Ascending aorta (tissue), 2 donors: ENCODE measurements at regions of chr19 and their contacts with region 1.

Region 1: GRCh38 chr19:2610637-2611482 is 91.6 kb downstream of the GNG7 start:
- DNase-seq: peak; percentile 80 to 97
- H3K4me3 ChIP-seq: peak overlapping the region; percentile 51 to 61
- H3K27ac ChIP-seq: peak overlapping the region; percentile 92 to 94
- H3K4me1 ChIP-seq: peaks cover 0 to 9% of the 10 kb centered on the region in 2 donors
- H3K27me3 ChIP-seq: no peaks in the 10 kb centered on the region
- CTCF ChIP-seq: peak; percentile 93 to 99 (median 94)

Region 2: GRCh38 chr19:2427429-2428320 is 183.2 kb before region 1 on chr19 and contains the start of gene TIMM13:
- intact Hi-C with region 1: loop called (anchors 2 kb)
- DNase-seq: peak; percentile 88 to 98
- H3K4me3 ChIP-seq: peak within 1 kb of the TSS; percentile 69 to 77
- H3K27ac ChIP-seq: peak within 1 kb of the TSS; percentile 86 to 95
- H3K4me1 ChIP-seq: peaks cover 19 to 25% of the 10 kb centered on the region in 2 donors
- H3K27me3 ChIP-seq: no peaks in the 10 kb centered on the region
- CTCF ChIP-seq: no peak
- total RNA-seq, gene TIMM13: 55.0 TPM

Region 3: DNA sequence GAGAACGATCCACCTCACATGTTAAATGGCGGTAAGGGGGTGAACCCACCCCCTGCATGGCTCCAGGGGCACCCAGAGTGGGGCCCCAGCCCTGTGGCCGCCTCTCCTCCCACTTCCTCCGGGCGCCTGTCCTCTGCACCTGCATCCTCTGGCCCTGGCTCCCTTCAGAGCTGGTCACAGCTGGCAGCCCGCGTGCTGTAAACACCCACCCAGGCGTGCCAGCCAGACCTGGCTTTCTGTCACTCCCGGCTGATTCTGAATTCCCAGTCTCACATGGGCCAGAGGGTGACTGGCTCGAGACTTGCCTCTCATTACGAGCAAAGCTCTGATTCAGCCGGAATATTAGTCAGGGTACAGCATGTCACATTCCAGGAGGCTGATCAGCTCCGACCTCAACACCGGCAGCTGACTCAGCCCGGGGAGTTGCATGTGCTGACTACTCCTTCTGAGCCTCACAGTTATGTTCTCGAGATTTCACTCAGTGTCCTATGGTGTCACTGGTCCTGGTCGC is 16.5 kb after region 1 on chr19:
- intact Hi-C with region 1: loop called (anchors 1 kb)
- DNase-seq: peak; percentile 93 to 98
- H3K4me3 ChIP-seq: no peak overlapping the region
- H3K27ac ChIP-seq: peak overlapping the region; percentile 90 to 95
- H3K4me1 ChIP-seq: peaks cover 17 to 18% of the 10 kb centered on the region in 2 donors
- H3K27me3 ChIP-seq: no peaks in the 10 kb centered on the region
- CTCF ChIP-seq: no peak

Region 4: DNA sequence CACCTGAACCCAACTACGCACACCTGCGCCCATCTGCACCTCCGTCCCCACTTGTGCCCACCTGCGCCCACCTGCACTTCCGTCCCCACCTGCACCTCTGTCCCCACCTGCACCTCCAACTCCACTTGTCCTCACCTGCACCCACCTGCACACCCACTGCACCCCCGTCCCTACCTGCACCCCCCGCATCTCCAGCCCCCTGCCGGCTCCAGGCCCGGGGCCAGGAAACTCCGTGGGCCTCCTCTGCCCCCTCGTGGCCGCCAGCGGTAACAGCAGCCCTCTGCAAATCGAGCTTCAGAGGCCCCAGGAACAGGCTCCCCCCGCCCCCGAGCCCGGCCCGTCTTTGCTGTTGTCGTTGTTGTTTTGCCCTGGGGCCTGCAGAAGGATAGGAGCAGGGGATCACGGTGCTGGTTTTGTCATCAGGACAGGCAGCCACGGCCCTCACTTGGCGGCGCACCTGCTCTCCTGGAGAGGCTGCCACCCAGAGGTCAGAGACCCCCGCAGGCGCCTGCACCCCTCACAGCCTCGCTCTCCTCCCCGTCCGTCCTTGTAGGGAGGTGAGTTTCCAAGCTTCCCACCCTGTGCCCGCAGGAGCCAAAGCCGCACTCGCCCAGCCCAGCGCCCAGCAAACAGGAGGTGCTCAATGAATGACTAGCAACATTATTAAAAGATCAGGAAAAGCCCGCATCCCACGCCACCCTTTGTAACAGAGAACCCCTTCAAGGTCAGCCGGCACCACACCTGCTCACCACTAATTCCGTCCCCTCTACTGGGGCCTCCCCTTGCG is 26.2 kb after region 1 on chr19:
- intact Hi-C with region 1: loop called (anchors 2 kb)
- DNase-seq: no peak
- H3K4me3 ChIP-seq: peak overlapping the region in 1 of 2 donors; percentile 32
- H3K27ac ChIP-seq: no peak overlapping the region
- H3K4me1 ChIP-seq: peaks cover 15 to 23% of the 10 kb centered on the region in 2 donors
- H3K27me3 ChIP-seq: no peaks in the 10 kb centered on the region
- CTCF ChIP-seq: peak; percentile 87 to 98 (median 94)